ENCODE measurements at regions of chr22 and their contacts with region 1.

Region 1: DNA sequence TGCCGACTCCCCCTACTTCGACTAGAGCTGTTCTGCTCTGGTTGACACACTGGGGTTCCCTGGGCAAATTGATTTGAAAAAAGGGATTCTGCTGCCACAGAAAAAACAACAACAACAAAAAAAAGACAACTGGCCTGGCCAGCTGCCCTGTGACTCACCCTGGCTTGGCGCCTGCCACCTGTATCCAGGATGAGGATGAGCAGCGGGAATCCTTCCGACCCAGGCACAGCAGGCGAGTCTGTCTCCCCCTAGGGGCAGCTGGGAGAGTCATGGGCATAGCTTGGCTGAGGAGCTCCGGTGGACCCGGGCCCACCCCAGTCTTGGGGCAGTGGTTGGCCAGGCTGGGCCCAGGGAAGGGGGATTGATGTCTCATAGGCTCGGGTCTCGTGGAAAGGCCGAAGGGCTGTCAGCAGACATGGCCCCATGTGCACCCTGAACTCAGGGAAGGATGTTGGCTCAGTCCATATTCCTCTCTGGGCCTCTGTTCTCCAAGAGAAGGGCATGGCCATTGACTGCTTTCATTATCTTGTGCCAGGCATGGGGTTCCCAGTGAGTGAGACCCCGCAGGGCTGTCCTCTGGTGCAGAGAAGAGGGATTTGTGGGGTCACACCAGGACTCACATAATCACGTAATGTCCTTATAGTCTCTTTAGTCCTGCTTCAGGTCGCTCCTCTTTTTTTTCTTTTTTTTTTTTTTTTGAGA is 10.4 kb upstream of the SUN2 start:
- DNase-seq: peak; percentile 46
- ATAC-seq: peak; percentile 62
- H3K4me3 Mint-ChIP-seq: no peak overlapping the region
- H3K27ac Mint-ChIP-seq: no peak overlapping the region
- H3K4me1 Mint-ChIP-seq: peaks cover 3% of the 10 kb centered on the region
- H3K27me3 Mint-ChIP-seq: no peaks in the 10 kb centered on the region

Region 2: DNA sequence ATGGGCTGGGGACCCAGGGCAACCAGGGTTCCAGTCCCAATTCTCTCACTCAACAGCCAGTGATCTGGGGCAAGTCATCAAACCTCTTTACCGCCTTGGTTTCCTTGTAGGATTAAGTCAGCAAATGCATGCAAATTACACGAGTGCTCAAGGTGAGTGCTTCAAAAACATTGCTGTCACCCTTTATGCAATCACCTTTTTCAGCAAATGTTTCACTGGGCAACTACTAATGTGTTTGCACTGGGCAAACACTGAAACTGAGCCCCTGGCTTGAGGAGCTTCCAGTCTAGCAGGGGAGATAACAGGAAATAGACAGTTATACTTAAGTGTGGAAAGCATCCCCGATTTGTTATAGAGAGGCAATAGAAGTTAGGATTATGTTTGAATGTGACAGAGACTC is 158.5 kb before region 1 on chr22:
- CTCF ChIA-PET with region 1: no interaction called
- POLR2A ChIA-PET with region 1: no interaction called
- DNase-seq: no peak
- ATAC-seq: no peak
- H3K4me3 Mint-ChIP-seq: no peak overlapping the region
- H3K27ac Mint-ChIP-seq: no peak overlapping the region
- H3K4me1 Mint-ChIP-seq: no peaks in the 10 kb centered on the region
- H3K27me3 Mint-ChIP-seq: peaks cover 6% of the 10 kb centered on the region

Region 3: GRCh38 chr22:38755911-38756532 is 10.2 kb before region 1 on chr22 and contains the start of gene SUN2:
- CTCF ChIA-PET with region 1: interaction called, 17 read pairs
- POLR2A ChIA-PET with region 1: interaction called, 4 read pairs
- DNase-seq: peak; percentile 95
- ATAC-seq: peak; percentile 76
- H3K4me3 Mint-ChIP-seq: peak within 1 kb of the TSS; percentile 97
- H3K27ac Mint-ChIP-seq: peak within 1 kb of the TSS; percentile 95
- H3K4me1 Mint-ChIP-seq: peaks cover 52% of the 10 kb centered on the region
- H3K27me3 Mint-ChIP-seq: no peaks in the 10 kb centered on the region
- total RNA-seq, gene SUN2: 481 to 482 TPM

Region 4: DNA sequence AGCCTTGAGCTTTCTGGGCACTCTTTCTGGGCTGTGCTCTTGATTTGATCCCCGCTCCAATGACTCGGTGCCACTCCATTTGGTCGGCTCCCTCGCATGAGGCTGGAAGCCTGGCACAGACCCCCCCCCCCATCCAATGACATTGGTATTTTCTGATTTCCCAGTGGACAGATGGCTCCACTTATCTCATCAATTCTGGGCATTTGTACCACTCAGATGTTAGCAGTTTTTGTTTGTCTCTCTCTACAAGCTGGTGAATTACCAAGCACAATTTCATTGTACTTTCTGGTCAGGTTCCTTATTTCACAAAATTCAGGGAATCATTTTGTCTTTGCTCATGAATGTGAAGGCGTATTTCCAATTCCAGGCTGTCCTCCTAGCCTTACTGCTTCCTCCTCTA is 18.6 kb after region 1 on chr22:
- CTCF ChIA-PET with region 1: interaction called, 13 read pairs
- POLR2A ChIA-PET with region 1: no interaction called
- DNase-seq: no peak
- ATAC-seq: no peak
- H3K4me3 Mint-ChIP-seq: no peak overlapping the region
- H3K27ac Mint-ChIP-seq: no peak overlapping the region
- H3K4me1 Mint-ChIP-seq: peaks cover 3% of the 10 kb centered on the region
- H3K27me3 Mint-ChIP-seq: no peaks in the 10 kb centered on the region

Region 5: GRCh38 chr22:38843201-38843715 is 77.0 kb after region 1 on chr22:
- CTCF ChIA-PET with region 1: interaction called, 13 read pairs
- POLR2A ChIA-PET with region 1: no interaction called
- DNase-seq: peak; percentile 56
- ATAC-seq: peak; percentile 90
- H3K4me3 Mint-ChIP-seq: no peak overlapping the region
- H3K27ac Mint-ChIP-seq: no peak overlapping the region
- H3K4me1 Mint-ChIP-seq: peaks cover 7% of the 10 kb centered on the region
- H3K27me3 Mint-ChIP-seq: peaks cover 53% of the 10 kb centered on the region

Region 6: DNA sequence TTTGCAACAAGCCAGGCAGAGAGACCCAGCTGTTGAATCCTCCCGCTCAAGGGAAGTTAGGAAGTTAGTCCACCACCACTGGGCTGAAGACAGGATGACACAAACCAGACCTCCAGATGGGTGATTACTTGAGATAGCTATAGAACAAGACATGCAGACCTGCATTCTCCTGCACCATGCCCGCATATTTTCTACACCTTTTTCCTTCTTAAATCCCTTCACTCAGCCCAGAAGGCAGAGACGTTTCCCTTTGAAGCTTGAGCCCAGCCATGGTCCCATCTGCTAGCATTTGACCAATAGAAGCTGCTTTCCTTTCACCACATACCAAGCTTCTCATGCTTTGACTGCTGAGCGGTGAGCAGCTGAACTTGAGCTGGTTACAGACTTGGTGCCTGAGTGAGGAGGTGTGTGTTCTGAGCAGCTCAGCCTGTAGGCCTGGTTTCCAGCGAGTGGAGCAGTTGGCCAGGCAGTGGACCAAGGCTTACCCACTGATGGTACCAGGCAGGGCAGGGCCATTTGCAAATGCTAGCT is 134.9 kb after region 1 on chr22:
- CTCF ChIA-PET with region 1: no interaction called
- POLR2A ChIA-PET with region 1: no interaction called
- DNase-seq: no peak
- ATAC-seq: peak; percentile 44
- H3K4me3 Mint-ChIP-seq: no peak overlapping the region
- H3K27ac Mint-ChIP-seq: no peak overlapping the region
- H3K4me1 Mint-ChIP-seq: peaks cover 15% of the 10 kb centered on the region
- H3K27me3 Mint-ChIP-seq: peaks cover 35% of the 10 kb centered on the region

Measured in activated CD8-positive, alpha-beta T cell treated with anti-CD3 and anti-CD28 coated beads, Interleukin-2, amount 10 ng/mL, durations not matched to agents 7 days and 5 days (primary cell).